Calu3 (cell line): ENCODE measurements at regions of chrX and their contacts with region 1.

Region 1: GRCh38 chrX:35461164-35461563 is 337.0 kb upstream of the MAGEB16 start:
- DNase-seq: no peak
- H3K4me3 Mint-ChIP-seq: no peak overlapping the region
- H3K27ac Mint-ChIP-seq: peak overlapping the region; percentile 78
- H3K4me1 Mint-ChIP-seq: peaks cover 23% of the 10 kb centered on the region
- H3K27me3 Mint-ChIP-seq: no peaks in the 10 kb centered on the region
- CTCF ChIP-seq: no peak

Region 2: GRCh38 chrX:35339796-35340195 is 121.4 kb before region 1 on chrX:
- CTCF ChIA-PET with region 1: no interaction called
- intact Hi-C with region 1: no loop called
- DNase-seq: no peak
- H3K4me3 Mint-ChIP-seq: no peak overlapping the region
- H3K27ac Mint-ChIP-seq: peak overlapping the region; percentile 66
- H3K4me1 Mint-ChIP-seq: peaks cover 19% of the 10 kb centered on the region
- H3K27me3 Mint-ChIP-seq: no peaks in the 10 kb centered on the region
- CTCF ChIP-seq: no peak

Region 3: DNA sequence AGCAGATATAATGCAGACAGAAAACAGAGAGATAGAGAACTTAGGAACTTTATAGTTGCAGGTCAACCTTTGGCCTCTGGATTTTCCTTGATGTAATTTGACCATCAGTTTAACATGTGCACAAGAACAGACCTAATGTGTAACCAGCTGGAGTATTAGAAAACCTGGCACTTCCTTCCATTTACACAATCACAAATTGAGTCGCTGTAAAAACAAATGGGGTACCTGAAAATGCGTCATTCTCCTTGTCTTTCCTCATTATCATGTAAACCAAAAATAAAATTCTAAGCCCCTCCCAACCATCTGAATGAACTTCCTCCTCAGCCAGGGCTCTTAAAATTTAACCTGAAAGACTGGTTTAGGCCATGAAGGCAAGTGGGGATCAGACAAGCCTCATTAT is 21.5 kb before region 1 on chrX:
- CTCF ChIA-PET with region 1: no interaction called
- intact Hi-C with region 1: loop called (anchors 2 kb)
- DNase-seq: peak; percentile 49
- H3K4me3 Mint-ChIP-seq: no peak overlapping the region
- H3K27ac Mint-ChIP-seq: peak overlapping the region; percentile 85
- H3K4me1 Mint-ChIP-seq: peaks cover 28% of the 10 kb centered on the region
- H3K27me3 Mint-ChIP-seq: no peaks in the 10 kb centered on the region
- CTCF ChIP-seq: no peak

Region 4: GRCh38 chrX:35499071-35499832 is 38.1 kb after region 1 on chrX:
- CTCF ChIA-PET with region 1: no interaction called
- intact Hi-C with region 1: loop called (anchors 5 kb)
- DNase-seq: no peak
- H3K4me3 Mint-ChIP-seq: no peak overlapping the region
- H3K27ac Mint-ChIP-seq: no peak overlapping the region
- H3K4me1 Mint-ChIP-seq: peaks cover 19% of the 10 kb centered on the region
- H3K27me3 Mint-ChIP-seq: no peaks in the 10 kb centered on the region
- CTCF ChIP-seq: no peak

Region 5: DNA sequence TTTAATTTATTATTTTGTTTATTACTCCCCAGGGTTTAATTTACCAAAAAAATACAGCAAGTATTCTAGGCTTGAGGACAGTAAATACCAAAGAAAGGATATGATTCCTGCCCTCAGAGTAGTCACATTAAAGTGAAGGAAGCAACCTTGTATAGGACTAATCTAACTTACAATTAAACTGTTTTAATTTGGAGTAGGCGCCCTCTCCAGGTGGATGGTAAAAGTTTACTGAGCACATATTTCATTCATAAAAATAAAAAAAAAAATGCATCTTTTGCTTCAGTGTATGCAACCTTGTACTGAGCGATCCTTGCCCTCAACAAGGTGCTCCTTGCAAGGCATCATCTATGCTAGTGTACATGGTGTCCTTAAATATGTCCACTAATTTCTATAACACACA is 265.0 kb after region 1 on chrX:
- CTCF ChIA-PET with region 1: no interaction called
- intact Hi-C with region 1: loop called (anchors 10 kb)
- DNase-seq: peak; percentile 30
- H3K4me3 Mint-ChIP-seq: no peak overlapping the region
- H3K27ac Mint-ChIP-seq: no peak overlapping the region
- H3K4me1 Mint-ChIP-seq: peaks cover 23% of the 10 kb centered on the region
- H3K27me3 Mint-ChIP-seq: no peaks in the 10 kb centered on the region
- CTCF ChIP-seq: peak; percentile 18